ENCODE measurements at regions of chr6 and their contacts with region 1.

Region 1: GRCh38 chr6:148166339-148166968 is 176.2 kb upstream of the SASH1 start:
- DNase-seq: no peak
- H3K4me3 ChIP-seq: no peak overlapping the region
- H3K27me3 ChIP-seq: no peaks in the 10 kb centered on the region; the same call in 1 of the 2 replicates
- CTCF ChIP-seq: peak; percentile 63

Region 2: DNA sequence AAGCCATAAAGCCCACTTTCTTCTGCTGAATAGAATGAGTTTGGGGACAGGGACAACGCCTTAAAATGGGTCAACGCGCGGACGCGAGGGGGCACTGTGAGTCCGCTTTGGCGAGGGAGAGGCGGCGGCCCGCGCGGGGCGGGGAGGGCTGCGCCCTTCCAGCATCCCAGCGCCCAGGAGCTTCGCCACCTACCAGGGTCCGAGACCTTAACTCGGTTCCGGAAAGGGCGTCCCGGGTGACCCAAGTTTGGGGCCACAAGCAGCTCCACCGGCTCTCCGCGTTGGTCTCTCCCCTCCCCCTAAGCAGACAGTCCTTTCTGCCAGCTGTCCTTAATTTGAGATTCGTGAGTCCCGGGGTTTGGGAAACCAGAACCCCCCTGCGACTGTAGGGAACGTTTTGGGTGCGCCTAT is 659.7 kb before region 1 on chr6:
- CTCF ChIA-PET with region 1: interaction called, 43 read pairs
- POLR2A ChIA-PET with region 1: no interaction called
- DNase-seq: no peak
- H3K4me3 ChIP-seq: peak overlapping the region; percentile 67
- H3K27me3 ChIP-seq: peaks cover 3% of the 10 kb centered on the region; the same call in 1 of the 2 replicates
- CTCF ChIP-seq: peak; percentile 89